Activated B cell treated with CpG ODN at 0.5 μM for 24 hours (primary cell): ENCODE measurements at regions of chr6 and their contacts with region 1.

Region 1: DNA sequence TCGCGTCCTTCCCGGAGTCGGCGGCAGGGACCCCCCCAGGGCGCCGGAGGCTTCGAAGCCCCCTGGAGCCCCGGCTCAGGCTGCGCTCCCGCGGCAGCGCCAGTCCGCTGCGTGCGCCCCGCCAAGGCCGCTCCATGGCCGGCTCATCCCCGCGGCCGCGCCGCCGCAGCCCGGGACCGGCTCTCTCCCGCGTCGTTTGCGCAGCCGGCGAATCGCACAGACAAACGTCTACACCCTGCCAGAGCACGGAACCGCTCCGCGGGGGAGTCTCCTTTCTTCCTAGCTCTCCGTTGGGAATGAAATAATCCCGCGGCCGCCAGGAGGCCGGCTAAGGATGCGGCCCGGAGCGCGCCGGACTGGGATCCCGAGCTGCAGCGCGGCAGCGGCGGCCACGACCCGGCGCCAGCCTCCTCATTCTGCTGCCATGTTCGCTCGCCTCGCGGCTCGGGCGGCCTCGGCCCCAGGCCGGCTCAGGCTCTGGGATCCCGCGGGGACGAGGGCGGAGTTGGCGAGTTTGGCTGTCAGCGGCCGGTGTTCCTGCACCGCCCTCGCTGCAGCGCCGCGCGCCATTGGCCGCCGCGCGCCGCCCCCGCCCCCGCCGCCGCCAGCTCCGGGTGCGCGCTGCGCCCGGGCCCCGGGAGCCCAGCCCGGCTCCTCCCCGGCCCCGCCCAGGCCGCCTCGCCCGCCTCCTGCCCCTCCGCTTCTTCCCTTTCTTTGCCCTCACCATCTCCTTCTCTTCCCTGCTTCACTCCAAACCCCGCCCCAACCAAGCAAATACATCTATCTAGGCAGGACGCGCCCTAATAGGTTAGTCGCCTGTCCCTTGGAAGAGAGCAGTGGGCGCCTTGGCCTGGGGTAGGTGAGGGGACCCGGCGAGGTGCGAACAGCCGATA is at the start of gene GFOD1:
- DNase-seq: peak; percentile 81
- ATAC-seq: peak; percentile 80
- H3K4me3 Mint-ChIP-seq: peak within 1 kb of the TSS; percentile 90
- H3K27ac Mint-ChIP-seq: peak within 1 kb of the TSS; percentile 85
- H3K4me1 Mint-ChIP-seq: peaks cover 44% of the 10 kb centered on the region
- H3K27me3 Mint-ChIP-seq: no peaks in the 10 kb centered on the region
- CTCF ChIP-seq: no peak
- total RNA-seq, gene GFOD1: 8.3 and 8.4 TPM in 2 replicates

Region 2: GRCh38 chr6:13272131-13273046 is 215.0 kb before region 1 on chr6:
- CTCF ChIA-PET with region 1: no interaction called
- POLR2A ChIA-PET with region 1: no interaction called
- intact Hi-C with region 1: loop called (anchors 2 kb)
- DNase-seq: peak; percentile 70
- ATAC-seq: peak; percentile 74
- H3K4me3 Mint-ChIP-seq: peak overlapping the region; percentile 95
- H3K27ac Mint-ChIP-seq: peak overlapping the region; percentile 96
- H3K4me1 Mint-ChIP-seq: peaks cover 77% of the 10 kb centered on the region
- H3K27me3 Mint-ChIP-seq: no peaks in the 10 kb centered on the region
- CTCF ChIP-seq: no peak

Region 3: DNA sequence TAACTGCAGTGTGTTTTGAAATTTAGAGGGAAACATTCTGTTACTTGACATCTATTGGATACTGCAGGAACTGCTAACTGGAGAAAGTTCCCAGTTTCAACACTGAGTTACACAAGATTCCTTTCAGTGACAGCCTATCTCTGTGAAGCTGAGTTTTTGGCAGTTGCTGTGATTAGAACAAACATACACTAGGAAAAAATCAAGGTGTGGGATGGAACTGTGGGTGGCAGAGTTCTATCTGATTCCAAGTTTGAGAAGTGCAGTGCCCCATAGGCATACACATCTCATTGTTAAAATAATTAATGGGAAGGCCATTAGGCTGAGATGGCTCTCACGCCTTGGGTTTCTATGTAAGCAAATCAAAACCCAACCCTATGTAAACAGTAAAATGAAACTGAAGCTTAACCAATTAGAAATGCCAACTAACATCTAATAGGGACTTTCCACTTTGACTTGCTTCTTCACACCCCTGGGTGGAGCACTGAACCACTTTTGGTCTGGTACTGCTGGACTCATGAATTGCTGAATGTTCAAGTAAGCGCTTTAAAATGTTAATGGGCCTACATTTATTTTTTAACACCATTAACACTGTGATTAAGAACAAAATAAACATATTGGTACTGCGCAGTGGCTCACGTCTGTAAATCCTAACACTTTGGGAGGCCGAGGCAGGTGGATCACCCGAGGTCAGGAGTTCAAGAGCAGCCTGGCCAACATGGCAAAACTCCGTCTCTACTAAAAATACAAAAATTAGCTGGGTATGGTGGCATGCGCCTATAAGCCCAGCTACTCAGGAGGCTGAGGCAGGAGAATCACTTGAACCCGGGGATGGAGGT is 103.8 kb before region 1 on chr6:
- CTCF ChIA-PET with region 1: interaction called, 4 read pairs
- POLR2A ChIA-PET with region 1: interaction called, 7 read pairs
- intact Hi-C with region 1: loop called (anchors 1 kb)
- DNase-seq: no peak
- ATAC-seq: peak; percentile 98
- H3K4me3 Mint-ChIP-seq: peak overlapping the region; percentile 44
- H3K27ac Mint-ChIP-seq: peak overlapping the region; percentile 82
- H3K4me1 Mint-ChIP-seq: peaks cover 73% of the 10 kb centered on the region
- H3K27me3 Mint-ChIP-seq: no peaks in the 10 kb centered on the region
- CTCF ChIP-seq: no peak

Region 4: GRCh38 chr6:13445005-13445743 is 42.2 kb before region 1 on chr6:
- CTCF ChIA-PET with region 1: no interaction called
- POLR2A ChIA-PET with region 1: interaction called, 10 read pairs
- intact Hi-C with region 1: no loop called
- DNase-seq: no peak
- ATAC-seq: no peak
- H3K4me3 Mint-ChIP-seq: no peak overlapping the region
- H3K27ac Mint-ChIP-seq: peak overlapping the region; percentile 13
- H3K4me1 Mint-ChIP-seq: peaks cover 34% of the 10 kb centered on the region
- H3K27me3 Mint-ChIP-seq: no peaks in the 10 kb centered on the region
- CTCF ChIP-seq: no peak

Region 5: DNA sequence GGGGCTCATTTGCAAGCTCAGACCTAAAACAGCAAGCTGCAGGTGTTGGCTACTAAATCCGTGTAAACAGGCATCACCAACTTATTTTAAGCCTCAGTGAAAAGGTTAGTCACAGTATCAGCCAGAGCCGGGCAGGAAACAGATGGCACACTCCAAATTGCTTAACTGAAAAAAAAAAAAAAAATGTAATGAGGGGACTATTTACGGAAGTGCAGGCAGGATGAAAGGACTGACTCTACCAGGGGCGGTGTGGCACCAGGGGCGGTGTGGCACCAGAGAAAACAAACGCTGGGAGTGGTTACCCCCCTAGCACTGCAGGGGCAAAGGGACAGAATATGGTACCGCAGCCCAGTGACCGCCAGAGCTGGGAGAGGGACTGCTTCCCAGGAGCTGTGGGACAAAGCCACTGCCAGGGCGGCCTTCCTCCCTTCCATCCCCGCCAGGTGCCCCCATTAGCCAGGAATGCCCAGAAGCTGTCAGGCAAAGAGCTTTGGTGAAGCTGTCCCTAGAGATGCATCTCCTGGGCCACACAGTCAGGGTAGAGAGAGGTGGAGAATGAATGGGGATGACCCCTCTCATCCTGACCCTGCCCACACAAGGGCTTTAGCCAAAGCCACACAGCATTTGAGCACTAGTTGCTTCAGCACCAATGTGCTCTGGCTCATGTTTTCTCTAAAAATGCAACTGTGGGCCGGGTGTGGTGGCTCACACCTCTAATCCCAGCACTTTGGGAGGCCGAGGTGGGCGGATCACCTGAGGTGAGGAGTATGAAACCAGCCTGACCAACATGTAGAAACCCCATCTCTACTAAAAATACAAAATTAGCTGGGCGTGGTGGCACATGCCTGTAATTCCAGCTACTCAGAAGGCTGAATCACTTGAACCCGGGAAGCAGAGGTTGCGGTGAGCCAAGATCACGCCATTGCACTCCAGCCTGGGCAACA is 39.6 kb after region 1 on chr6:
- CTCF ChIA-PET with region 1: no interaction called
- POLR2A ChIA-PET with region 1: interaction called, 19 read pairs
- intact Hi-C with region 1: loop called (anchors 1 kb)
- DNase-seq: peak; percentile 41
- ATAC-seq: peak; percentile 90
- H3K4me3 Mint-ChIP-seq: peak overlapping the region; percentile 3
- H3K27ac Mint-ChIP-seq: peak overlapping the region; percentile 78
- H3K4me1 Mint-ChIP-seq: peaks cover 47% of the 10 kb centered on the region
- H3K27me3 Mint-ChIP-seq: no peaks in the 10 kb centered on the region
- CTCF ChIP-seq: no peak

Region 6: GRCh38 chr6:13614926-13615798 is 127.8 kb after region 1 on chr6 and contains the start of gene NOL7:
- CTCF ChIA-PET with region 1: interaction called, 5 read pairs
- POLR2A ChIA-PET with region 1: interaction called, 34 read pairs
- intact Hi-C with region 1: loop called (anchors 2 kb)
- DNase-seq: peak; percentile 98
- ATAC-seq: peak; percentile 91
- H3K4me3 Mint-ChIP-seq: peak within 1 kb of the TSS; percentile 98
- H3K27ac Mint-ChIP-seq: peak within 1 kb of the TSS; percentile 94
- H3K4me1 Mint-ChIP-seq: peaks cover 43% of the 10 kb centered on the region
- H3K27me3 Mint-ChIP-seq: no peaks in the 10 kb centered on the region
- CTCF ChIP-seq: peak; percentile 30
- total RNA-seq, gene NOL7: 67.5 and 74.4 TPM in 2 replicates